Calu3 (cell line): ENCODE measurements at regions of chr7 and their contacts with region 1.

Region 1: DNA sequence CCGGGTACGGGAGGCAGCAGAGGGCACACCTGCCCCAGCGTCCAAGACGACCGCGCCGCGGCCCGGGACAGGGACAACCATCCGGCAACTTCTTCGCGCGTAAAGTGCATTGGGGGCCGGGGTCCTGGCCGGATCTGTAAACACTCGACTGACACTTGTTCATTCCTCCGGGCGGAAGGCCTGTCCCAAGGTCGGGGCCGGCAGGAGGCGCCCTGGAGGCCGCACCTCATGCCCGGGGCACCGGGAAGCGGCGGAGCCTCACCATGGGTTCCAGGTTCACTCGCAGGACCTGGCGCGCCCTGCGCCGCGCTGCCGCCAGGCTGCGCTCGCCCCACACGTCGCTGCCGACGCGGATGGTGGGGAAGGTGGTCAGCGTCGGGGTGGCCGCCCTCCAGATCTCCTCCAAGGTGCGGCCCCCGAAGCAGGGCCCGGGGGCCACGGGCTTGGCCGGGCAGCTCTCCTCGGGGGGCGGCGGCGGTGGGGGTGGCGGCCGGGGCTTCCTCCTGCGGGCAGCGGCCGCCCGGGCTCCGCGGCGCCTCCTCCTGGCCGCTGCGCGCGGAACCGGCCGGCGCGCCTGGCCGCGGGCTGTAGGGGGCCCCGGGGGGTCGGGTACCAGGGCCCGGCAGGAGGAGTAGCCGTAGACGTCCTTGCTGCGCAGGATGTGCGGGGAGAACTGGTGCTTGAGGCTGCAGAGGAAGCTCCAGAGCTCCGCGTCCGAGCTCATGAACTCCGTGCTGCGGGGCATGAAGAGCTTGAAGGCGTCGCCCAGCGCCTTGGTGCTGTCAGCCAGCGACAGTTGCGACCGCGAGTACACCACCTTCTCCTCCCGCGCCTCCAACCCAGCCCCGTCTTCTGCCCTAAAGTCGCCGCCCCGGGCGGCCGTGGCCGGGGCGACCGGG is 746 bp downstream of the CCDC71L start:
- DNase-seq: peak; percentile 91
- H3K4me3 Mint-ChIP-seq: peak overlapping the region; percentile 75
- H3K27ac Mint-ChIP-seq: peak overlapping the region; percentile 93
- H3K4me1 Mint-ChIP-seq: peaks cover 8% of the 10 kb centered on the region
- H3K27me3 Mint-ChIP-seq: no peaks in the 10 kb centered on the region
- CTCF ChIP-seq: peak; percentile 90

Region 2: DNA sequence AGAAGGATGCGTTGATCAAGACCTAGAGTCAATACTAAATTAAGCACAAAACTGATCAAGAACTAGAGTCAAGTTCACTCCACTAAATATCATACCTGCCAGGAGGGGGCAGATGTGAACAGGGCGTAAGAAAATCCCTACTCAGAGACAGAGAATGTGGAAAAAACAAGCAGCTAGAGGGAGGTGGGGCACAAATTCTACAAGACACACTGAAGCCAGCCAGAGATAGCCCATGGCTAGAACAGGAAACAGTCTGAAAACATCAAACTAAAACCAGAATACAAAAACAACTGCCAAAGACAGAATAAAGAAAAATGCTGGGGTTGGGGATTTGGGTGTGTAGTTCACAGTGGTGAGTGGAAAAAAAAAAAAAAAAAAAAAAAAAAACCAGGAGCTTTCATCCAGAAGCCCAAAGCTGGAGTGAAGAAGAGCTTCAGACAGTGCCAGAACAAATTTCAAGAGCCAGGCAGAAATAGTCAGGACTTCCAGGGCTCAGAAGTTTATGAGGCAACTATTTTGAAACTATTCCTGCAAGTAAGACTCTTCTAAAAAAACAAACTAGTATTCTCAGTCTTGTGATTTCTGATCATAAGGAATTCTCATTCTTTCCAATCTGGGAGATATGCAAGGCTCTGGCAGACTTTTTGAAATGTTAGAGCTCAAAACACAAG is 117.5 kb before region 1 on chr7:
- CTCF ChIA-PET with region 1: interaction called, 32 read pairs
- intact Hi-C with region 1: loop called (anchors 1 kb)
- DNase-seq: peak; percentile 79
- H3K4me3 Mint-ChIP-seq: no peak overlapping the region
- H3K27ac Mint-ChIP-seq: peak overlapping the region; percentile 40
- H3K4me1 Mint-ChIP-seq: peaks cover 19% of the 10 kb centered on the region
- H3K27me3 Mint-ChIP-seq: no peaks in the 10 kb centered on the region
- CTCF ChIP-seq: peak; percentile 60

Region 3: DNA sequence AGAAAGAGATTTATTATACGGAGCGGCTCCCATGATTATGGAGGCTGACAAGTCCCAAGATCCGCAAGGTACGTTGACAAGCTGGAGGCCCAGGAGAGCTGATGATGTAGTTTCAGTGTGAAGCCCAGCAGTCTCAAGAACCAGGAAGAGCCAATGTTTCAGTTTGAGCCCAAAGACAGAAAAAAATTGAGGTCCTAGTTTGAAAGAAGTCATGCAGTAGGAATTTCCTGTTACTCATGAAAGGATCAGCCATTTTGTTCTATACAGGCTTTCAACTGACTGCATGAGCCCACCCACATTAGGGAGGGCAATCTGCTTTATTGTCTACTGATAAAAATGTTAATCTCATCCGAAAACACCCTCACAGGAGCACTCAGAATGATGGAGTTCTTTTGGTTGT is 50.8 kb before region 1 on chr7:
- CTCF ChIA-PET with region 1: interaction called, 4 read pairs
- intact Hi-C with region 1: loop called (anchors 5 kb)
- DNase-seq: no peak
- H3K4me3 Mint-ChIP-seq: no peak overlapping the region
- H3K27ac Mint-ChIP-seq: peak overlapping the region; percentile 32
- H3K4me1 Mint-ChIP-seq: peaks cover 11% of the 10 kb centered on the region
- H3K27me3 Mint-ChIP-seq: no peaks in the 10 kb centered on the region
- CTCF ChIP-seq: no peak

Region 4: GRCh38 chr7:106626376-106627167 is 33.6 kb before region 1 on chr7:
- CTCF ChIA-PET with region 1: interaction called, 3 read pairs
- intact Hi-C with region 1: loop called (anchors 2 kb)
- DNase-seq: peak; percentile 45
- H3K4me3 Mint-ChIP-seq: peak overlapping the region; percentile 65
- H3K27ac Mint-ChIP-seq: peak overlapping the region; percentile 98
- H3K4me1 Mint-ChIP-seq: peaks cover 60% of the 10 kb centered on the region
- H3K27me3 Mint-ChIP-seq: no peaks in the 10 kb centered on the region
- CTCF ChIP-seq: no peak

Region 5: DNA sequence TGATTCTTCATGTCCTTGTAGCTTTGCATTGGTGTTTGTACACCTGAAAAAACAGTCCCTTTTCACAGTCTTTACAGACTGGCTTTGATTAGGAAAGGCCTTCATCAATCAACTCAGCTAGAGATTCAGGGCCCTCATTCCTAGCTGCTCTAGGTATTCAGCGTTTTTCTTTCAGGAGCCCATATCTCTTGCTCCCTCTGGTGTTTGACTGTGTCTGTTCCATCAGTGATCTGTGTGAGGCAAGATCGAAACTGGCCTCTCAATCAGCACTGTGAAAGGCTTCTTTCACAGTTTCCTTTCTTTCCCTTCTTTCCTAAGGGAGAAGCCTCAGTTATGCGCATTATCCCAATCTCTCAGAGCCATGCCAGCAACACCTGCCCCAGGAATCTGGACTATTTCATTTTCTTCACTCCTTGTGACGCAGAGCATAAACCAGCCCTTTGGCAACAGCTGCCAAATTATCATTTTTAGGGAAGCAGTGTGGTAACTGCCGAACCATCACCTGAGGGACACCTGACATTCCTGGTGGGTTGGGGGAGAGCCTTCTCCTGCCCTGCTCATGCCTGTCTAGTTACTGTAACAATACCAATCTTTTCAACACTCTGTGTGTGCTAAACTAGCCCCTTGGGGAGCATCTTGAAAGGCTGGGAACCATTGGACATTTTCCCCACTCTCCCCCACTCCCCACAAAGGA is 76.4 kb after region 1 on chr7:
- CTCF ChIA-PET with region 1: interaction called, 46 read pairs
- intact Hi-C with region 1: loop called (anchors 1 kb)
- DNase-seq: peak; percentile 62
- H3K4me3 Mint-ChIP-seq: peak overlapping the region; percentile 40
- H3K27ac Mint-ChIP-seq: peak overlapping the region; percentile 48
- H3K4me1 Mint-ChIP-seq: peaks cover 16% of the 10 kb centered on the region
- H3K27me3 Mint-ChIP-seq: no peaks in the 10 kb centered on the region
- CTCF ChIP-seq: peak; percentile 30

Region 6: GRCh38 chr7:106779877-106780276 is 119.7 kb after region 1 on chr7:
- CTCF ChIA-PET with region 1: interaction called, 3 read pairs
- intact Hi-C with region 1: loop called (anchors 5 kb)
- DNase-seq: peak; percentile 78
- H3K4me3 Mint-ChIP-seq: peak overlapping the region; percentile 42
- H3K27ac Mint-ChIP-seq: peak overlapping the region; percentile 96
- H3K4me1 Mint-ChIP-seq: peaks cover 60% of the 10 kb centered on the region
- H3K27me3 Mint-ChIP-seq: no peaks in the 10 kb centered on the region
- CTCF ChIP-seq: peak; percentile 39

Region 7: DNA sequence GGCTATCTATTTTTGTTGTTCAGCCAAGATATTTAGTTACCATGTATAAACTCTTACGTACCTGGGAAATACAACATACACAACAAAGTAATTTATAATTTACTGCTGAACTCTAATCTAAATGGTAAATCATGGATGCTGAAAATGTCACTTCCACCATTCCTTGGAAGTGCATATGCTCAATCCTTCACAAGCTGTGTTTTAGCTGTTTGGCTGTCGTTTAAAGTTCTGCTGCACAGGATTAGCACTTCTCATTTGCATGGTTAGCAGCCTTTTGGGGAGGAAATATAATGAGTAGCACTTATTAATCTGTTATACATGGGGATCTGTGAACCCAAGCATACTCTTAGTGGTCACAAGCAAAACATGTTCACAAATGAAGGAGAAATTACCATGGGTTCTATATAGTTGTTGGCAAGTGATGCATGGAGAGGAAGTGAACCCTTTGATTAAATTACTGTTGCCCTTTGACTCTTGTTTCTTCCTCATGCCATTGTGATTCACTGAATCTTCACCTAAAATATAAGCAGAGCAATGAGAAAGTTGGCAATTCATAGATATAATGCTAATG is 223.3 kb after region 1 on chr7:
- CTCF ChIA-PET with region 1: no interaction called
- intact Hi-C with region 1: no loop called
- DNase-seq: no peak
- H3K4me3 Mint-ChIP-seq: no peak overlapping the region
- H3K27ac Mint-ChIP-seq: no peak overlapping the region
- H3K4me1 Mint-ChIP-seq: no peaks in the 10 kb centered on the region
- H3K27me3 Mint-ChIP-seq: no peaks in the 10 kb centered on the region
- CTCF ChIP-seq: no peak